ENCODE measurements at regions of chr11 and their contacts with region 1.

Region 1: GRCh38 chr11:2992234-2992996 is at the start of gene NAP1L4:
- DNase-seq: peak; percentile 95
- H3K4me3 Mint-ChIP-seq: peak within 1 kb of the TSS; percentile 99
- H3K27ac Mint-ChIP-seq: peak within 1 kb of the TSS; percentile 99
- H3K4me1 Mint-ChIP-seq: peaks cover 30% of the 10 kb centered on the region
- H3K27me3 Mint-ChIP-seq: no peaks in the 10 kb centered on the region
- total RNA-seq, gene NAP1L4: 284 and 285 TPM in 2 replicates

Region 2: GRCh38 chr11:1852877-1853276 is 1139.5 kb before region 1 on chr11 and contains the start of gene LSP1:
- intact Hi-C with region 1: loop called (anchors 10 kb)
- DNase-seq: peak; percentile 84
- H3K4me3 Mint-ChIP-seq: peak within 1 kb of the TSS; percentile 98
- H3K27ac Mint-ChIP-seq: peak within 1 kb of the TSS; percentile 99
- H3K4me1 Mint-ChIP-seq: peaks cover 53% of the 10 kb centered on the region
- H3K27me3 Mint-ChIP-seq: no peaks in the 10 kb centered on the region
- total RNA-seq, gene LSP1: 257 and 262 TPM in 2 replicates

Region 3: DNA sequence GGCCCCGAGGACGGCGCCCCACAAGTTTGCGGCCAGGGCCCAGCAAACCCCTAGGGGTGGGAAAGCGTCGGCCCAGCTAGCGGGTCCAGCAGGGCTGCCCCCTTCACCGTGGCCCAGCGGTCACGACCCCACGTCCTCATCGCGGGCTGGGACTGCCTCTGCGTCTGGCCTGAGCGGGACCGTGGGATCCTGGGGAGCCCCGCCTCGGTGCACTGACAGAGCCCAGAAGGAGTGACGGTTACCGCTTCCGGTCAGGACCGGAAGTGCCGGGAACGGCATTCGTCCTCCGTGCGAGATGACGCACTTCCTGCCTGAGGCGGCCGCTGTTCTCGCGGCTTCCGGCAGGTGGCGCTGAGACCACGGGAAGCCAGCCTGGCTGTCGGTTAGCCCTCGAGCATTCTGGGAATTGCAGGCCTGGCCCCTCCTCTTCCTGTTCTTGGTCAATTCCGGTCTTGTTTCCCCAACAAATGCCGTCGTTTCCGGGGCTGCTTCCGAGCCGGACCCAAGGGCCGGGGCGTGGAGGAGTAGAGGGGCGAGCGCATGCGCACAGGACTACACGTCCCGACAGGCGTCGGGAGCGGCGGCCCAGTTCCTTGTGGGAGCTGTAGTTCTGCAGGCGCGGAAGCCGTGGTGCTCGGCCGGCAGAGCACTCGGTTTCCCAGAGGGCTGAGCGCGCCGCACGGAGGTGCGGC is 592.2 kb before region 1 on chr11 and contains the start of gene TSSC4:
- intact Hi-C with region 1: loop called (anchors 1 kb)
- DNase-seq: peak; percentile 99
- H3K4me3 Mint-ChIP-seq: peak within 1 kb of the TSS; percentile 92
- H3K27ac Mint-ChIP-seq: peak within 1 kb of the TSS; percentile 84
- H3K4me1 Mint-ChIP-seq: no peaks in the 10 kb centered on the region
- H3K27me3 Mint-ChIP-seq: no peaks in the 10 kb centered on the region
- total RNA-seq, gene TSSC4: 70.8 and 76.4 TPM in 2 replicates

Region 4: DNA sequence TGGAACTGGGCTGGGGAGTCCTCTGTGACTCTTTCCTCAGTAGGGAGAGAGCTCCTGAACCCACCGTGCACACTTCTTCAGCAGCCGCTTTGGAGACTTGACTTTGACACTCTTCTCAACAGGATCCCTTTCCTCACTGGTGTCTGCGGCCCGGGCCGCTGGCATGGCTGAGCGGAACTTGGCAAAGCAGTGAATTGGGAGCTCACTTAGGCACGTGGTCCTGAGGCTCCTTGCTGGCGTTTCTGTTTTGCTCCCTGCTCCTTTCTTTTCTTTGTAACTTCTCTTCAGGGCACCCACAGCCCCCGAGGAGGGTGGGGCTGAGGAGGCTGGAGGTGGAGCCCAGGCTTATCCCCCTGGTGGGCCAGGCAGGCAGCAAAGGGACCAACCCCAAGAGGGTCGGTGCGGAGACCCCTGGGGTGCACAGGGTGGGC is 284.2 kb before region 1 on chr11:
- intact Hi-C with region 1: no loop called
- DNase-seq: no peak
- H3K4me3 Mint-ChIP-seq: no peak overlapping the region
- H3K27ac Mint-ChIP-seq: no peak overlapping the region
- H3K4me1 Mint-ChIP-seq: no peaks in the 10 kb centered on the region
- H3K27me3 Mint-ChIP-seq: no peaks in the 10 kb centered on the region

Region 5: GRCh38 chr11:2901854-2902783 is 90.3 kb before region 1 on chr11:
- intact Hi-C with region 1: loop called (anchors 1 kb)
- DNase-seq: peak; percentile 93
- H3K4me3 Mint-ChIP-seq: peak overlapping the region; percentile 72
- H3K27ac Mint-ChIP-seq: no peak overlapping the region
- H3K4me1 Mint-ChIP-seq: peaks cover 41% of the 10 kb centered on the region
- H3K27me3 Mint-ChIP-seq: no peaks in the 10 kb centered on the region

Region 6: DNA sequence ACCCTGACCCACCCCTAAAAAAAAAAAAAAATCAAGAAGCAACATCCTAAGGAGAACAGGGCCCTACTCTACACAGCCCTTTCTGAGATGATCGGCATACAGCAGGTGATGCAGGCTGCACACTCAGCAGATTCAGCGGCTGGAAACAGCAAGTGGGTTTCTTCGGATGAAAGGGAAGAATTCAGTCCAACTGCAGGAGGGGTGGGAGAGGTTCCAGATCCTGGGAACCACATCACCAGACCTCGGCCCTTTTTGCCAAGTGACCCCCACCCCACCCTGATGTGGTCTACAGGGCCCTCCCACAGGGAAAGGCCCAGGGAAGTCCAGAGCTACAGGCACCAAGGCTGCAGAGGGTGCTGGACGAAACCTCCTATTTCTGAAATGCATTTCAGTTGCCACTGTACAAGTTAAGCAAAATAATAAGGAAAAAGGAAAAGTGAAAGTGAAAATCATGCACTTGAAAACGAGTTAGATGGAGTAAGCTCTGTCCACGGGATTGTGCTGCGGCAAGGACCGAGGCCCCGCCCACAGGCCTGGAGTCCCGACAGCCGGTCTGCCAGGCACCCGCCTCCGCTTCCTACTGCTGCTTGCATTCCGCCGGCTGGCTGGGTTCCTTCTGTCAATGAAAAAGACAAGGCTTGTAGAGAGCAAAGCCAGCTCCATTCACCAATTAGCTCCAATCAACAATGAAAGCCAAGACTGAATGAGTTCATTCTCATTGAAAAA is 47.2 kb before region 1 on chr11:
- intact Hi-C with region 1: no loop called
- DNase-seq: peak; percentile 46
- H3K4me3 Mint-ChIP-seq: peak overlapping the region; percentile 39
- H3K27ac Mint-ChIP-seq: no peak overlapping the region
- H3K4me1 Mint-ChIP-seq: peaks cover 40% of the 10 kb centered on the region
- H3K27me3 Mint-ChIP-seq: no peaks in the 10 kb centered on the region

Region 7: GRCh38 chr11:2975594-2975993 is 16.8 kb before region 1 on chr11:
- intact Hi-C with region 1: loop called (anchors 1 kb)
- DNase-seq: peak; percentile 14
- H3K4me3 Mint-ChIP-seq: no peak overlapping the region
- H3K27ac Mint-ChIP-seq: no peak overlapping the region
- H3K4me1 Mint-ChIP-seq: peaks cover 29% of the 10 kb centered on the region
- H3K27me3 Mint-ChIP-seq: no peaks in the 10 kb centered on the region

Region 8: DNA sequence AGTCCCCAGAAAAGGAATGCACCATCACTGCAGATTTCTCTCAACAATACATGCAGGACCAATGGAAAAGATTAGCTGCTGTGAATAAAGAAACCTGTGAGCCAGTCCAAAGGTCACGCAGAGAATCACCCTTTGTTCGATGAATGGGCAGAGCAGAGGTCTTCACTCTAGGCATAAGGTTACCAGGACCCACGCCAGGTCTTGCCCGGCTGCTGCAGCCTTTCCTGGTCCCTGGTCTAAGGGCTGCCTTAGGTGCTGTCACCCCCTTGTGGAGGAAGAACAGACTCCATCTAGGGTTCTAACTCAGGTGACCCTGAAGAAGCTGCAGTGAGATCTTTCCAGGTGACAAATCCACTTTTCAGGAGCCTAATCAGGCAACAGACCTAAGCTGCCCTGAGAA is 28.7 kb after region 1 on chr11:
- intact Hi-C with region 1: no loop called
- DNase-seq: no peak
- H3K4me3 Mint-ChIP-seq: no peak overlapping the region
- H3K27ac Mint-ChIP-seq: no peak overlapping the region
- H3K4me1 Mint-ChIP-seq: peaks cover 27% of the 10 kb centered on the region
- H3K27me3 Mint-ChIP-seq: no peaks in the 10 kb centered on the region

Region 9: DNA sequence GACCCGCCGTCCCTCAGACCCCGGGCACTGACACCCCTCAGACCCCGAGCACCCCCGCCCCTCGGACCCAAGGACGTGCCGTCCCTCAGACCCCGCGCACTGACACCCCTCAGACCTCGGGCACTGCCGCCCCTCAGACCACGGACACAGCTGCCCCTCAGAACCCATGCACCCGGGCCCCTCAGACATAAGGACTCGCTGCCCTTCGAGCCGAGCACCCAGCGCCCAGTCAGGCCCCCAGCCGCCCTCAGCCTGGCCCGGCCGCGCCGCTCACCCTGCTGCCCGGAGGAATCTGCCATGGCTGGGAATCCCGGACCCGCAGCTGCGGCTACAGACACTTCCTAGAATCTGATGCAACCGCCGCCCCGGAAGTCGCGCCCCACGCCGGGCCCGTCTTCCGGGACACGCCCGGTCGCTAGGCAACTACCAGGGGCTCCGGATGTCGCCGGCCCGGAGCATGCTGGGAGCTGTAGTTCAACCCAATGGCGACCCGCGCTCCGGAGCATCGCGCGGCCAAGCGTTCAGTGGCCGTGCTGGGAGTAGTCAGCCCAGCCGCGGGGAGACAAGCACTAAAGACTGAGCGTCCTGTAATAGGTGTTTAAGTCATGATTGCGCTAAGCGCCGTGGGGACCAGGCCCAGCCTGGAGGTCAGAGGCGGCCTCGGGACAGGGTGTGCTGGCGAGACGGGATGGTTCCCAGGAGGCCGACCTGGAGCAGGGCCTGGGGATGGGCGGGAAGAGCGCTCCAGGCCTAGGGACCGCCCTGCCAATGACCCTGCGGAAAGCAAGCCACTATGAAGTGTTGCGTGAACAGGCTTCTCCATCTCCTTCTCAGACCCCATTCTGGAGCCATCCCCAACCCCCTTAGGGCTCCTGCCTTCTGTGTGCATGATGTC is 64.9 kb after region 1 on chr11 and contains the start of gene CARS1:
- intact Hi-C with region 1: loop called (anchors 1 kb)
- DNase-seq: peak; percentile 93
- H3K4me3 Mint-ChIP-seq: peak within 1 kb of the TSS; percentile 90
- H3K27ac Mint-ChIP-seq: peak within 1 kb of the TSS; percentile 83
- H3K4me1 Mint-ChIP-seq: peaks cover 35% of the 10 kb centered on the region
- H3K27me3 Mint-ChIP-seq: peaks cover 3% of the 10 kb centered on the region
- total RNA-seq, gene CARS1: 60.5 and 63.6 TPM in 2 replicates

Region 10: DNA sequence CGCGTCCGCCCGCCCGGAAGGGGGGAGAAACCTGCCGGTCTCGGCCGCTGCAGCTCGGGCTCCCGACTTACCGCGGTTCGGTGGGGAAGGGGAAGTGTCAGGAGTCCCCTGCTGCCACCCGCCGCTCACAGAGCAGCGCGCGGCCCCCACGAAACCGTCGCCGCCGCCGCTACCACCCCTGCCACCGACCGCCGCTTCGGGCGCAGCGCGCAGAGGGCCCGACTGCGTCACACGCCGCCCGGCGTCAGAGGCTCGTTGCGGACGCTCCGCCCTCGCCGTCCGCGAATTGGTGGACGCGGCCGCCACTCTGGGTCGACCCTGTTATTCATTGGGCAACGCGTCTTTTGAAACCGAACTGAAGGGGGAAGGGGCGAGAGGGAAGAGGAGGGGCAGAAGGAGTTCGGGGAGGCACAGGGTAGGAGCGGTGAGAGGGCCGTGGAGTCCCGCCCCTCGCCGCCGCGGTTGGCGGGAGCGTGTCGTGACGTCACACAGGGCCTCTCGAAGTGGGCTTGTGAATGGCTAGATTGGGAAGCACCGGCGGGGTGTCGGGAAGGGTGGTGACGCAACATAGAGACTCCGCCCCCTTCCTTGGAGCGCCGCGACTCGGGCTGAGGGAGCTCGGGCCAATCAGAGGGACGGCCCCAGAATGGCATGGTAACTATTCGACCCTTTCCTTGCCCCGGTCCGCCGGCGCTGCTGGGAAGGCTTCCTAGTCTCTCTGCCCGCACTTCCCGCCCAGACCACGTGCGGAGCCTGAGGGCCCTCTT is 805.1 kb after region 1 on chr11 and contains the start of gene NUP98:
- intact Hi-C with region 1: loop called (anchors 5 kb)
- DNase-seq: peak; percentile 100
- H3K4me3 Mint-ChIP-seq: peak within 1 kb of the TSS; percentile 99
- H3K27ac Mint-ChIP-seq: peak within 1 kb of the TSS; percentile 95
- H3K4me1 Mint-ChIP-seq: peaks cover 35% of the 10 kb centered on the region
- H3K27me3 Mint-ChIP-seq: no peaks in the 10 kb centered on the region
- total RNA-seq, gene NUP98: 122 and 123 TPM in 2 replicates